GM18951 (cell line): ENCODE measurements at regions of chr17 and their contacts with region 1.

Region 1: GRCh38 chr17:7912927-7913524 is 3.1 kb downstream of the RNF227 start:
- POLR2A ChIP-seq: no peak

Region 2: DNA sequence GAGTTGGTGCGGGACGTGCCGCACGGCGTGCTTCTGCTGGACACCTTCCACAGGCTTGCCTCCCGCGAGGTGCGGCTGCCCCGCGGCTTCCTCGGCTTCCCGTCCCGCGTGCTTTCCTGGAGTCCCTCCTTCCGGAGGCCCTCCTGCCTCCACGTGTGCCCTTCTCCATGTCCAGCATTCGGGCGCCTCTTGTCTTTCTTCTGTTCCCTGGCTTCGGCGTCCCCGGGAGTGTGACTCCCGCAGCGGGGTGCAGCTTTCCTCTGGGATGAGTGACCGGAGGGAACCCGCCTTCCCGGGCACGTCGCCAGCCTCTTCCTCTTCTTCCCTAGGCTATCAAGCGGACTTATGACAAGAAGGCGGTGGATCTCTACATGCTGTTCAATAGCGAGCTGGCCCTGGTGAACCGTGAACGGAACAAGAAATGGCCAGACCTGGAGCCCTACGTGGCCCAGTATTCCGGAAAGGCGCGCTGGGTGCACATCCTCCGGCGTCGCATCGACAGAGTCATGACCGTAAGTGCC is 172.5 kb before region 1 on chr17:
- in situ Hi-C with region 1: no loop called
- POLR2A ChIP-seq: no peak

Region 3: DNA sequence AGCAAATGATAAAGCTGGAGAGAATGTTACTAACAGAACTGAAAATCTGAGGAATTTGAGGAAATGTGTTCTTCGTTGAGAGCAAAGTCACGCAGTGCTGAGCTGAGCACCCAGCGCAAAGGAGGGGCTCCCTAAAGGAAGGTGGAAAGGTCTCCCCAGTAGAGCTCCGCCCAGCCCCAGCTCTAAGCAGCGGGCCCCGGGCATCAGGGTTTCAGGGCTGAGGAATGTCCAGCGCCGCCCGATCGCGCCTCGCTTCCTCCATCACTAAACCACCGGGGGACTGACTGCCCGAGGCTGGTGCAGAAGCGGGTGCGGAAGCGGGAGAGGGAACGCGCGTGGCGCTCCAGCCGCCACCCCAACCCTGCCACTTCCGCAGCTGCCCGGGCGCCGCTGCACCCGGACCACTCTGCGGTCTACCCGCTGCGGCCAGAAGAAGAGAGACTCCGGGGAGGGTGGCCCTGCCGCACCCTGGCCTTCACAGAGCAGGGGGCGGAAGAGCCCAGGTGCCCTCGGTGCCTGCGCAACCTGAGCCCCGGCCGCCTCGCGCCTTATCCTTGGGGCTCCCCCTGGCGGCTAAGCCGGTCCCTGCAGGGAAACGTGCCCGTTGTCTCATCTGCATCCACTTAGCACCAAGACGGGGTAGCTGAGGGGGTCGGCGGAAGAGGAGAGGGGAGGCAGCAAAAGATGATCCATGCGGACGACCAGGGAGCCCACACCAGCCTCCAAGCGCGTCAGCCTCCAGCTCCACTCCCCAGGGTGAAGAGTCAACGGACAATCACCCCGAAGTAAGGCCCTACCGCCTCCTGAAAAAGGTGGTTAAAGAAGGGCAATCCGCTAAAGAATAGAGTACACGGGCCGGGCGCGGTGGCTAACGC is 77.0 kb after region 1 on chr17:
- in situ Hi-C with region 1: loop called (anchors 5 kb)
- POLR2A ChIP-seq: peak; percentile 63

Region 4: DNA sequence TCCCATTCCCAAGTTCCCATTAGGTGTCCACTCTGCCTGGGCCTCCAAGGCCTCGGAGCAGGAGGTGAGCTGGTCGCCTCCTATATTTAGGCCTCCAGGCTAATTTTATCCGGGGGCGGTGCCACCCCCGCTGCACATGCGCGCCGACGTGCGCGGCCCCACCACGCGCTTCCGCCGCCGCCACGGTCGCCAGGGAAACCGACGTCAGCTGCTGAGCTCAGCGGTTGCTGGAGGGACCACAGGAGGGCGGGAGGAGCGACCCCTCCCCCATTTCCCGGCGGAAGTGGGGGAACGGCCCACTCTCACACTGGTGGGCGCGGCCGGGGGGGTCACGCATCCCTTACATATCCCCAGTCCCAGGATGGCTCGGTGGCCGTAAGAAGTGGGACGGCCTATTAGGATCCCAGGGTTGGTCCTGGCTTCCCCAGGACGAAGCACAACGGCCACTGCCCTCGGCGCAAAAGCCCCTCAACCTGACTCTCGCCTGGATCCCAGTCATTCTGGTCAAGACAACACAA is 238.2 kb after region 1 on chr17:
- in situ Hi-C with region 1: no loop called
- POLR2A ChIP-seq: peak; percentile 33

Region 5: DNA sequence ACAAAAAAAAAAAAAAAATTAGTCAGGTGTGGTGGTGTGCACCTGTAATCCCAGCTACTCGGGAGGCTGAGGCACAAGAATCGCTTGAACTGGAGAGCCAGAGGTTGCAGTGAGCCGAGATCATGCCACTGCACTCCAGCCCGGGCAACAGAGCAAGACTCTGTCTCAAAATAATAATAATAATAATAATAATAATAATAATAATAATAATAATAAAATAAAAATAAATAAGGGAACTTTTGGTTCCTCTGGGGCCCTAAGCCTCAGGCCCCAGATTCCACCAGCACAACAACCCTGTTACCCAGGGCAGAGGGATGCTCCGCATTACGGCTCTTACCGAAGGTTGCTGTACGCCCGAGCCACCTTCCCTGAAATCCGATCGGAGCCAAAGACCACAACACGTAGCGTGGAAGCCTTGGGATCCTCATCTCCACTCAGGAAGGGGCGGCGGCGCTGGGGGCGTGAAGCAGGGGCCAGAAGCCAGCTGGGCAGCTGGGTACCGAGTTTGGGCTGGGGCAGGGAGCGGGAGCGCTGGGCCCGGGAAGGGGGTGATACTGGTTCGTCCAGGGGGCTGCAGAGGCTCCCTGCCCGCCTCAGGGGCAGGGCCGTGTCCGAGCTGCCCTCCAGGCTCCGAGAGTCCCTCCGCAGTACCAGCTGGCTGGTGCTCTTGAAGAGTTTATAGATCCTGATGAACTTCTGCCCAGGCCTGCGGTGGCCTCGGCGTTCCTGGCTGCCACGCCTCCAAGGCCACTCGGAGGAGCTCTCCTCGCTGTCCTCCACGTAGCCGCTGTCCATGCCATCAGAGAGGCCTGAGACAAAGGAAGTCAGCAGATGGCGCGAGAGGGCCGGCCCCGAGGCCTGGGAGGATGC is 975.0 kb after region 1 on chr17:
- in situ Hi-C with region 1: no loop called
- POLR2A ChIP-seq: no peak